Posterior vena cava (tissue), 2 donors: ENCODE measurements at regions of chr2 and their contacts with region 1.

Region 1: GRCh38 chr2:10812362-10813162 is at the start of gene PDIA6:
- DNase-seq: peak; percentile 99
- total RNA-seq, gene PDIA6: 111 to 144 TPM

Region 2: GRCh38 chr2:10770946-10771750 is 41.4 kb before region 1 on chr2:
- intact Hi-C with region 1: loop called in 1 of 2 experiments (anchors 1 kb)
- DNase-seq: peak; percentile 71